ENCODE measurements at regions of chr4 and their contacts with region 1.

Region 1: DNA sequence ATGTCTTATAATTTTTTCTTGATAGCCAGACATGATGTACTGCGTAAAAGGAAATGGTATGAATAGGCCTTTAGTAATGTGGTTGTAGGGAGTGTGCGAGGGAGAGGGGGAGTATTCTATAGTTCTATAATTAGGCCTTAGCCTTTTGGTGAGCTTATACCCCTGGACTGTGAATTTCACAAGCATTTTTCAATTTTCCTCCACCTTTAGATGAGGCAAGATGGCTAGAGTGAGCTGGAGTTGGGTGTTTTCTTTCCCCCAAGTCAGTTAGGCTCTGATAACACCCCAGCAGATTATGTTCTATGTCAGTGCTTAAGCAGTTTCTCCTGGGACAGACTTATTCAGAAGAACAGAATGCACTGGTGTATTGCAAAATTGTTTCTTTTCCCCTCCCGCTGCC is 210.2 kb upstream of the NPY2R start:
- DNase-seq: no peak
- ATAC-seq: no peak
- H3K4me3 ChIP-seq: no peak overlapping the region
- H3K4me3 Mint-ChIP-seq: no peak overlapping the region
- H3K27ac ChIP-seq: no peak overlapping the region
- H3K27ac Mint-ChIP-seq: no peak overlapping the region
- H3K4me1 ChIP-seq: no peaks in the 10 kb centered on the region
- H3K4me1 Mint-ChIP-seq: no peaks in the 10 kb centered on the region
- H3K27me3 ChIP-seq: no peaks in the 10 kb centered on the region
- H3K27me3 Mint-ChIP-seq: no peaks in the 10 kb centered on the region
- CTCF ChIP-seq: no peak

Region 2: GRCh38 chr4:154317201-154317999 is 680.9 kb before region 1 on chr4:
- CTCF ChIA-PET with region 1: no interaction called
- POLR2A ChIA-PET with region 1: no interaction called
- intact Hi-C with region 1: loop called in 1 of 2 experiments (anchors 5 kb)
- DNase-seq: no peak
- ATAC-seq: no peak
- H3K4me3 ChIP-seq: no peak overlapping the region
- H3K4me3 Mint-ChIP-seq: no peak overlapping the region
- H3K27ac ChIP-seq: no peak overlapping the region
- H3K27ac Mint-ChIP-seq: no peak overlapping the region
- H3K4me1 ChIP-seq: no peaks in the 10 kb centered on the region
- H3K4me1 Mint-ChIP-seq: no peaks in the 10 kb centered on the region
- H3K27me3 ChIP-seq: no peaks in the 10 kb centered on the region
- H3K27me3 Mint-ChIP-seq: peaks cover 9% of the 10 kb centered on the region
- CTCF ChIP-seq: no peak

Measured in CD8-positive, alpha-beta T cell (primary cell).